Activated CD4-positive, alpha-beta T cell treated with anti-CD3 and anti-CD28 coated beads, Interleukin-2, amount 10 ng/mL, durations not matched to agents 24 days and 14 days (primary cell): ENCODE measurements at regions of chr6 and their contacts with region 1.

Region 1: GRCh38 chr6:32195652-32195901 is 3.1 kb upstream of the GPSM3 start:
- DNase-seq: peak; percentile 100
- H3K4me3 Mint-ChIP-seq: peak overlapping the region; percentile 98
- H3K27ac Mint-ChIP-seq: peak overlapping the region; percentile 99
- H3K4me1 Mint-ChIP-seq: peaks cover 40% of the 10 kb centered on the region
- H3K27me3 Mint-ChIP-seq: peaks cover 2% of the 10 kb centered on the region

Region 2: DNA sequence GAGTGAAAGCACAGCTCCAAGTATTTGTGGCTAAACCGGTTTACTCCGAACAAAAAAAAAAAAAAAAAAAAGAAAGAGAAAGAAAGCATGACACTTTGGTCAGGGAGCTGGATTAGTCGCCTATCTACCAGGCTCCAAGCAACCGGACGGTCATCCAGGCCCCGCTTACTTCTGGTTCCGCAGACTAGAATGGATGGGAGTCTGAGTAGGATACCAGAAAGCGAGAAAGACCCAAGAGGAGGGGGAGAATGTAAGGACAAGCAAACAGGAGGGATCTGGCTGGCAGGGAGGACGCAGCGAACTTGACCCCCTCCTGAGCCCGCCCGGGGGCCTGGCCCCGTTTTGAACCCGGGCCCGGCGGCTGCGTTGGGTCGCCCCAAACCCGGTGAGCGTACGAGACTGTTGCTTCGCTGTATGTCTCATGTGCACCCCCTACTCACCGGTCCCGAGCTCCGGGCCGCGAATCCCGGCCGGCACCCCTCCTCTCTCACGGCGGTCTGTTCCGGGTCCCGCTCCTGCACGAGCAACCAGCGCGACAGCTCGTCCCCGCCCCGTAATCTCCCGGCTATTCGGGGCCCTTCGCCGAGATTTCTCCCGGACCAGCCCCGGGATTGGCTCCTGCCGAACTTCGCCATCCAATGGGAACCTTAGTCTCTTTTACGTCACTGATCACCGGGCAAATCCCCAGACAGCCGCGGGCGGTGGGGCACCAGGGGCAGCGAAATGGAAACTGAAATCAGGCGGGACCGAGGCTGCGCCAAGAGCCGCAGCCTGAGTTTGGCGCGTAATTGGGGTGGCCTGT is 1982.5 kb before region 1 on chr6 and contains the start of gene TRIM26:
- intact Hi-C with region 1: loop called (anchors 10 kb)
- DNase-seq: peak; percentile 100
- H3K4me3 Mint-ChIP-seq: peak within 1 kb of the TSS; percentile 96
- H3K27ac Mint-ChIP-seq: peak within 1 kb of the TSS; percentile 98
- H3K4me1 Mint-ChIP-seq: peaks cover 47% of the 10 kb centered on the region
- H3K27me3 Mint-ChIP-seq: peaks cover 2% of the 10 kb centered on the region
- total RNA-seq, gene TRIM26: 58.3 and 60.1 TPM in 2 replicates

Region 3: GRCh38 chr6:31896856-31897611 is 298.5 kb before region 1 on chr6:
- intact Hi-C with region 1: loop called (anchors 1 kb)
- DNase-seq: peak; percentile 71
- H3K4me3 Mint-ChIP-seq: peak overlapping the region; percentile 97
- H3K27ac Mint-ChIP-seq: peak overlapping the region; percentile 89
- H3K4me1 Mint-ChIP-seq: peaks cover 30% of the 10 kb centered on the region
- H3K27me3 Mint-ChIP-seq: no peaks in the 10 kb centered on the region

Region 4: DNA sequence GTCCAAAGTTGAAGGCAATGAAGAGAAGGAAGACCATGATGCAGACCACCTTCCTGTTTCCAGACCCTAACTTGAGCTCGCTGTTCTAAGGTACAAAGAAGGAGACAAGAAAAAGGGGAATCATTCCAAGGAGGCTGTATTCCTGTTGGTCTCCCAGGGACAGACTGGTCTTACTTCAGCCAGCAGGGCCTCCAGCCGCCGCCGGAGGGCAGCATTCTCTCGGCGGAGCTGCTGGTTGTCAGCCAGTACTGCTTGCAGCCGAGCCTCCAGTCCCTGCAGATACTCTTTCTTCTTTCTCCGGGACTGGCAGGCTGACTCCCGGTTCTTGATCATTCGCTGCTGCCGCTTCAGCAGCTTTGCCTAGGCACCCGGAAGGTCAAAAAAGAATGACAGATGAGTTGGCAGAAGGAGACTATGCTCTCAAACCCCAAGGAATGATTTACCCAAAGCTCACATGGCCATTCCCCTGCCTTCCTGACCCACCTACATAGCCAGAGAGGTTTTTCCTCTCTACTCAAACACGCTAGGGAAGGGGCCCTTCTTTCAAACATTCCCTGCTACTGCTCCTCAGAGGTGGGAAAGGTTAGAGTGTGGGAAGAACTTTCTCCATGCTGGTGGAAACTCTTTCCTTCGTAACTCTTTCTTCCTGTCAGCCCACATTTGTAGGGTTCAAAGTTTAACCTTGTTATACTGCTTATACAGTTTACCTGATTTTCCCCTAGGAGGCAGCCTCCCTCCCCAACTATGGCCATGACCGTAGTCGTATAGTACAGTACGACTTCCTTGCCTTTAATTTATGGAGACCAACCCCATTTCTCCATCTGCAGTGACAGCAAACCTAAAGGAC is 76.6 kb before region 1 on chr6:
- intact Hi-C with region 1: loop called (anchors 2 kb)
- DNase-seq: peak; percentile 92
- H3K4me3 Mint-ChIP-seq: no peak overlapping the region
- H3K27ac Mint-ChIP-seq: no peak overlapping the region
- H3K4me1 Mint-ChIP-seq: peaks cover 5% of the 10 kb centered on the region
- H3K27me3 Mint-ChIP-seq: no peaks in the 10 kb centered on the region

Region 5: DNA sequence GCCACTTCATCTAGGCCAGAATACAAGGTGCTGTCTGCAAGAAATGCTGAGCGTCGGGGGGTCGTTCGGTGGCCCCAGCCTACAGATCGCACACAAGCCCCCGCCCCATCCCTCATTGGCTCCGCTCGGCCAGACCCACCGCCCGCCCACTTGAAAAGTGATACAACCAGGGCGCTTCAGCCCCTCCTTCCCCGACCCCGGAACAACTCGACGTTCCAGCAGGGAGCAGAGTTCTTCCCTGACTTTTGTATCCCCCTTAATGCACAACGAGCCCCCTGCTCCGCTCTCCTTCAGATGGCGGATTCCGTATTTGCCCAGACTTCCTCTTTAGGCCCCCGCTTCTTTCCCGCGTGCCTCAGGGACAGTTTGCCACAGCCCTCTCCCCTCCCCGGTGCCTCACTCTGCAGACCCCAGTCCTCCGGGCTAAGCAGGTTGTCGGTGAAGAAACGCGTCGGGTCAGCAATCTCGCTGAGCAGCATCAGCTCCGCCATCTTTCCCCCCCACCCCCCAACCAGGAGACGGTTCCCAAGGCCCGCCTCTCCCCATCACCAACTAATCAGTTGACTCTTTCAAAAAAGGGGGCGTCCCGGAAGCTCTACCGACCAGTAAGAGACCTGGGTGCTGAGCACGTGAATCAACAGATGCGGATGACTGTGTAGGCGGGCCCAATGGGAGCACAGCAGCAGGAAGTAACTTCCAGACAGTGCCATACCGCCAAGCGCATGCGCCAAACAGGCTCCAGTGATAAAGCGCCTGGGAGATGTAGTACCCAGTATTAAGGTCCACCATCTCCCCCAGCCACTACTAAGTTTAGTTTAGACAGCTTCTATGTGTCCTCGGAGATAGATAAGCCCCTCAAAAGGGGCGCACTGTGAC is 67.6 kb before region 1 on chr6 and contains the start of gene ATF6B:
- intact Hi-C with region 1: loop called (anchors 1 kb)
- DNase-seq: peak; percentile 98
- H3K4me3 Mint-ChIP-seq: peak within 1 kb of the TSS; percentile 100
- H3K27ac Mint-ChIP-seq: peak within 1 kb of the TSS; percentile 96
- H3K4me1 Mint-ChIP-seq: peaks cover 39% of the 10 kb centered on the region
- H3K27me3 Mint-ChIP-seq: peaks cover 2% of the 10 kb centered on the region
- total RNA-seq, gene ATF6B: 72.9 and 81.0 TPM in 2 replicates

Region 6: GRCh38 chr6:32153564-32154513 is 41.7 kb before region 1 on chr6 and contains the start of gene PPT2:
- intact Hi-C with region 1: loop called (anchors 1 kb)
- DNase-seq: peak; percentile 89
- H3K4me3 Mint-ChIP-seq: peak within 1 kb of the TSS; percentile 84
- H3K27ac Mint-ChIP-seq: peak within 1 kb of the TSS; percentile 72
- H3K4me1 Mint-ChIP-seq: peaks cover 31% of the 10 kb centered on the region
- H3K27me3 Mint-ChIP-seq: peaks cover 34% of the 10 kb centered on the region
- total RNA-seq, gene PPT2: 11.3 and 12.7 TPM in 2 replicates

Region 7: DNA sequence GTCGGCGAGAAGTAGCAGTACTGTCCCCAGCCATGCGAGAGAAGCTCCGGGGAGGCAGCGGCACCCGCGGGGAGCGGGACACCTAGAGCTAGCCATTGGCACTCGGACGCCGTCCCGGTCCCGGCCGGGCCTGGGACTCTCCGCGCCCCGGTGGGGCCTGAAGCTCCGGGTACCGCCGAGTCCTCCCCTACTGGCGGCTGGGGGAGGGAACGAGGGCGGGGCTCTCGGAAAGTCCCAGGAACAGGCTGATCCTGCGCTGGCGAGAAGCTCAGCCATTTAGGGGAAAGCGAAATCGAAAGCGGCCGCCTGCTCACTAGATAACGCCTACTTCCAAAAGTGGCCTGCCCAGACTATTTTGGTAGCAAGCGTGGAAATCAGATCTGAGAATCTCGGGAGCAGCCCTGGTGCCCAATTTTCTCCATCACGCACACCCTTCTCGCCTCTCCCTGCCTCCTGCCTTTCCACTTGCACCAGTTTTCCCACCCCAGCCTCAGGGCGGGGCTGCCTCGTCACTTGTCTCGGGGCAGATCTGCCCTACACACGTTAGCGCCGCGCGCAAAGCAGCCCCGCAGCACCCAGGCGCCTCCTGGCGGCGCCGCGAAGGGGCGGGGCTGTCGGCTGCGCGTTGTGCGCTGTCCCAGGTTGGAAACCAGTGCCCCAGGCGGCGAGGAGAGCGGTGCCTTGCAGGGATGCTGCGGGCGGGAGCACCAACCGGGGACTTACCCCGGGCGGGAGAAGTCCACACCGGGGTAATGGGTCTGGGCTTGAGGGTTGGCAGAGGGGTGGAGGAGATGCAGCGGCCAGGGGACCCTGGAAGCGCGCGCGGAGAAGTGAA is 658.2 kb after region 1 on chr6 and contains the starts of genes PSMB9 and TAP1:
- intact Hi-C with region 1: loop called (anchors 5 kb)
- DNase-seq: peak; percentile 98
- H3K4me3 Mint-ChIP-seq: peak within 1 kb of the TSS; percentile 97
- H3K27ac Mint-ChIP-seq: peak within 1 kb of the TSS; percentile 96
- H3K4me1 Mint-ChIP-seq: peaks cover 59% of the 10 kb centered on the region
- H3K27me3 Mint-ChIP-seq: no peaks in the 10 kb centered on the region
- total RNA-seq, gene PSMB9: 249 and 257 TPM in 2 replicates
- total RNA-seq, gene TAP1: 275 and 283 TPM in 2 replicates